ENCODE measurements at regions of chr1 and their contacts with region 1.

Region 1: DNA sequence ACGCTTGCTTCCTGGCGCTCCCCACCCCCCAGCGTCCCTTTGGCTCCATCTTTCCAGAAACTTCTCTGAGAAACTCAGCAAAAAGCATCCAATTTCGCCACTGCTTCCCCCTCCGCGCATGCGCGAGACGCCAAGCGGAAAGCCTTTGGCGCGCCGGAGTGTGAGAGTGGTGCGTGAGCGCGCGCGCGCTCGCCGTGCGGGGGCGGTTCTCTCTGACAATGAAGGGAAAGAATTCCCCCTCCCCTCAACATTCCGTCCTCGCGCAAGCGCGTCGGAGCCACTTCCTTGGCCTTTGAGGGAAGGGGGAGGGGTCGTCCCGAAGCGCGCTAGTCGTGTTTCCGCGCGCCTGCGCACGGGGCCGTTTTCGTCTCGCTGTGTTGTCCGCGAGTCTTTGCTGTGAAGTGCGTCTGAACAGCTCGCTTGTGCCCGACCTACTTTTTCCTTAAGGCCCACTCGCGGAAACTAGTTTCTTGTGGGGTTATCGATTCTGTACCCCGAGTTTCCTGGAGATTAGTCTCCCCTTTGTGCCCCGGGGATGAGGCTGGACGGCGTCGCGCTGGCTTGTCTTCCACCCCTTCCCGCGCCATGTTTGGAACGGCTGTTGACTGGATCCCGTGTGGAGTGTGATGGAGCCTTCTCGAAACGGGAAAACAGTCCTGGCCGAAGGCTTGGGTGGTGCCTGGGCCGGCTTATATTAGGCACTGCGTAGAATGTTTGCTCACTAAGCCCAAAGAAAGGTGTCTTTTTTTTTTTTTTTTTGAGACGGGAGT is 11.6 kb upstream of the SPEN start:
- DNase-seq: peak; percentile 96 to 98
- H3K4me3 ChIP-seq: peak overlapping the region; percentile 64
- H3K4me3 Mint-ChIP-seq: peak overlapping the region; percentile 88
- H3K27ac Mint-ChIP-seq: peak overlapping the region; percentile 96
- H3K4me1 ChIP-seq: no peaks in the 10 kb centered on the region
- H3K4me1 Mint-ChIP-seq: no peaks in the 10 kb centered on the region
- H3K27me3 ChIP-seq: no peaks in the 10 kb centered on the region
- H3K27me3 Mint-ChIP-seq: no peaks in the 10 kb centered on the region
- CTCF ChIP-seq: no peak

Region 2: GRCh38 chr1:15617175-15617880 is 218.6 kb before region 1 on chr1 and contains the start of gene DDI2:
- CTCF ChIA-PET with region 1: no interaction called
- POLR2A ChIA-PET with region 1: no interaction called
- intact Hi-C with region 1: loop called (anchors 10 kb)
- DNase-seq: peak; percentile 96 to 97
- H3K4me3 ChIP-seq: peak within 1 kb of the TSS; percentile 95
- H3K4me3 Mint-ChIP-seq: peak within 1 kb of the TSS; percentile 88
- H3K27ac Mint-ChIP-seq: peak within 1 kb of the TSS; percentile 86
- H3K4me1 ChIP-seq: peaks cover 33% of the 10 kb centered on the region
- H3K4me1 Mint-ChIP-seq: peaks cover 27% of the 10 kb centered on the region
- H3K27me3 ChIP-seq: no peaks in the 10 kb centered on the region
- H3K27me3 Mint-ChIP-seq: no peaks in the 10 kb centered on the region
- CTCF ChIP-seq: no peak
- total RNA-seq, gene DDI2: 53.1 and 53.4 TPM in 2 replicates

Region 3: DNA sequence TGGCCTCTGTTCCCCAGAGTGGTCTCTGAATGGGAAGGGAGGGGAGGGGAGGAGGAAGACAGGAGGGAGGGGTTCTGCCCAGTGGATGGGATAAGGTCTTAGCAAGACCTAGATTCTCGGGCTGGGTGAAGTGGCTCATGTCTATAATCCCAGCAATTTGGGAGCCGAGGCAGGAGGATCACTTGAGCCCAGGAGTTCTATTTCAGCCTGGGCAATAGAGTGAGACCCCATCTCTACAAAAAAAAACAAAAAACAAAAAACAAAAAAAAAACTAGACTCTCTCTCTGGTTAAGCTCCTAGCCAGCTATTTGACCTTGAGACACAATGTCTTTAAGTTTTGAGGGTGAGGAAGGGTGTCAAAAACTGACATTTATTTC is 39.9 kb before region 1 on chr1:
- CTCF ChIA-PET with region 1: interaction called, 10 read pairs
- POLR2A ChIA-PET with region 1: interaction called, 10 read pairs
- intact Hi-C with region 1: loop called (anchors 1 kb)
- DNase-seq: no peak
- H3K4me3 ChIP-seq: no peak overlapping the region
- H3K4me3 Mint-ChIP-seq: no peak overlapping the region
- H3K27ac Mint-ChIP-seq: peak overlapping the region; percentile 92
- H3K4me1 ChIP-seq: peaks cover 78% of the 10 kb centered on the region
- H3K4me1 Mint-ChIP-seq: peaks cover 50% of the 10 kb centered on the region
- H3K27me3 ChIP-seq: no peaks in the 10 kb centered on the region
- H3K27me3 Mint-ChIP-seq: no peaks in the 10 kb centered on the region
- CTCF ChIP-seq: no peak

Region 4: GRCh38 chr1:15820478-15820877 is 15.4 kb before region 1 on chr1:
- CTCF ChIA-PET with region 1: interaction called, 17 read pairs
- POLR2A ChIA-PET with region 1: interaction called, 10 read pairs
- intact Hi-C with region 1: no loop called
- DNase-seq: no peak
- H3K4me3 ChIP-seq: no peak overlapping the region
- H3K4me3 Mint-ChIP-seq: no peak overlapping the region
- H3K27ac Mint-ChIP-seq: no peak overlapping the region
- H3K4me1 ChIP-seq: no peaks in the 10 kb centered on the region
- H3K4me1 Mint-ChIP-seq: no peaks in the 10 kb centered on the region
- H3K27me3 ChIP-seq: no peaks in the 10 kb centered on the region
- H3K27me3 Mint-ChIP-seq: no peaks in the 10 kb centered on the region
- CTCF ChIP-seq: no peak

Region 5: GRCh38 chr1:15847100-15847892 is 11.4 kb after region 1 on chr1 and contains the start of gene SPEN:
- CTCF ChIA-PET with region 1: interaction called, 8 read pairs
- POLR2A ChIA-PET with region 1: interaction called, 39 read pairs
- intact Hi-C with region 1: no loop called
- DNase-seq: peak; percentile 96 to 98
- H3K4me3 ChIP-seq: peak within 1 kb of the TSS; percentile 75
- H3K4me3 Mint-ChIP-seq: peak within 1 kb of the TSS; percentile 95
- H3K27ac Mint-ChIP-seq: peak within 1 kb of the TSS; percentile 95
- H3K4me1 ChIP-seq: peaks cover 14% of the 10 kb centered on the region
- H3K4me1 Mint-ChIP-seq: no peaks in the 10 kb centered on the region
- H3K27me3 ChIP-seq: no peaks in the 10 kb centered on the region
- H3K27me3 Mint-ChIP-seq: no peaks in the 10 kb centered on the region
- CTCF ChIP-seq: no peak
- total RNA-seq, gene SPEN: 46.4 and 47.3 TPM in 2 replicates

Region 6: DNA sequence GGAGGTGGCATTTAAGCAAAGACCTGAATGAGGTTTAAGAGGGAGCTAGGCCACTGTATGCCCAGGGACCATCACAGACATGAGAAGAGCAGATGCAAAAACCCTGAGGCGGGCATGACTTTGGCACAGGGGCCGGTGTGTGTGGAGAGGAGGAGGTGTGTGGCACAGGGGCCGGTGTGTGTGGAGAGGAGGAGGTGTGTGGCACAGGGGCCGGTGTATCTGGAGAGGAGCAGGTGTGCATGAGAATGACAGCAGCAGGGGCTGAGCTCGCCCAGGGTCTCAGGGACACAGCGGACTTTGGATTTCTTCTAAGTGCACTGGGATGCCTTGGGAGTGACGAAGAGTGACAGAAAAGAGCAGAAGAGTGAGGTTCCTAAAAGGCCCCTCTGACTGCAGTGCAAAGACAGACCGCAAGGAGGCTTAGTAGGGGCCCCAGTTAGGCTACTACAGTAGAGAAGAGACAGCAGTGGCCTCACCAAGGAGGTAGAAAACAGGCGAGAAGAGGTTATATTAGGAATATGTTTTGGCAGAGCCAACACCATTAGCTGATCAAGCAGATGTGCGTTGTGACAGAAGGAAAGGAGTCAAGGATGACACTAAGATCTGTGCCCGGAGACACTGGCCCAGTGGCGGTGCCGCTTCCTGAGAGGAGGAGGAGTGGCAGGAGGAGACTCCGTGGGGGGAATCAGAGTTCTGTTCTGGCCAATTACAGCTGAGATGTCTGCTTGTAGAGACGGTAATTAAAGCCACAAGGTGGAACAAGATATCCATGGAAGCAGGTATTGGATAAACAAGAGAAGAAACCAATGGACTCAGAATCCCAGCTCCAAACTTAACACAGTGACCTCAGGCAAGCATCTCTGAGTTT is 121.5 kb after region 1 on chr1:
- CTCF ChIA-PET with region 1: no interaction called
- POLR2A ChIA-PET with region 1: no interaction called
- intact Hi-C with region 1: no loop called
- DNase-seq: no peak
- H3K4me3 ChIP-seq: no peak overlapping the region
- H3K4me3 Mint-ChIP-seq: no peak overlapping the region
- H3K27ac Mint-ChIP-seq: no peak overlapping the region
- H3K4me1 ChIP-seq: no peaks in the 10 kb centered on the region
- H3K4me1 Mint-ChIP-seq: peaks cover 4% of the 10 kb centered on the region
- H3K27me3 ChIP-seq: no peaks in the 10 kb centered on the region
- H3K27me3 Mint-ChIP-seq: no peaks in the 10 kb centered on the region
- CTCF ChIP-seq: peak in 1 of 2 experiments; percentile 28

Measured in Caco-2 (cell line).